BJ (cell line): ENCODE measurements at regions of chr17 and their contacts with region 1.

Region 1: DNA sequence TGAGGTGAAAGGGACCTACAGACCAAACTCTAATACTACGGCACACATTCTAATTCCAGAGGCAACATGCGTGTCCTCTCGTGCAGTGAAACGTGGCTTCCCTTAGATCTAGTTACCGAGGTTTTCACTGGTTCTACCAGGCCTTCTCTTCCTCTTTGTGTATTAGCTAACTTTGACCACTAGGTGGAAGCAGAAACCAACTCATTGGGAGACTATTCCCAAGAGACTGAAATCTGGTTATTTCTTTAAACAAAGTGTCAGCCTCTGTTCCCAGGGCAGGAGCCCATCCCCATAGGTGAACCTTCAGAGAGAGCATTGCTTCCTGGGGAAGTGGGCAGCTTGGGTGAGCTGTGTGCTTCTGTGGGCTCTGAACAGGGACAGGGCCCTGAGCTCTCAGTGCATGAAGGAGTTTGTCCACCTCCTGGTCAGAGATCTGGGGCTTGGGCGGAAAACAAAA is 19.7 kb upstream of the RCVRN start:
- DNase-seq: no peak
- H3K4me3 ChIP-seq: no peak overlapping the region
- H3K27me3 ChIP-seq: peaks cover 3% of the 10 kb centered on the region; the same call in 1 of the 2 replicates
- CTCF ChIP-seq: peak; percentile 82

Region 2: GRCh38 chr17:9912121-9913099 is 12.4 kb before region 1 on chr17:
- CTCF ChIA-PET with region 1: interaction called, 14 read pairs
- POLR2A ChIA-PET with region 1: no interaction called
- DNase-seq: no peak
- H3K4me3 ChIP-seq: no peak overlapping the region
- H3K27me3 ChIP-seq: no peaks in the 10 kb centered on the region
- CTCF ChIP-seq: no peak

Region 3: GRCh38 chr17:9937241-9937761 is 12.5 kb after region 1 on chr17:
- CTCF ChIA-PET with region 1: interaction called, 17 read pairs
- POLR2A ChIA-PET with region 1: no interaction called
- DNase-seq: no peak
- H3K4me3 ChIP-seq: no peak overlapping the region
- H3K27me3 ChIP-seq: no peaks in the 10 kb centered on the region; the same call in 1 of the 2 replicates
- CTCF ChIP-seq: no peak

Region 4: GRCh38 chr17:9959377-9959981 is 34.7 kb after region 1 on chr17:
- CTCF ChIA-PET with region 1: interaction called, 25 read pairs
- POLR2A ChIA-PET with region 1: no interaction called
- DNase-seq: no peak
- H3K4me3 ChIP-seq: no peak overlapping the region
- H3K27me3 ChIP-seq: no peaks in the 10 kb centered on the region
- CTCF ChIP-seq: peak; percentile 64

Region 5: DNA sequence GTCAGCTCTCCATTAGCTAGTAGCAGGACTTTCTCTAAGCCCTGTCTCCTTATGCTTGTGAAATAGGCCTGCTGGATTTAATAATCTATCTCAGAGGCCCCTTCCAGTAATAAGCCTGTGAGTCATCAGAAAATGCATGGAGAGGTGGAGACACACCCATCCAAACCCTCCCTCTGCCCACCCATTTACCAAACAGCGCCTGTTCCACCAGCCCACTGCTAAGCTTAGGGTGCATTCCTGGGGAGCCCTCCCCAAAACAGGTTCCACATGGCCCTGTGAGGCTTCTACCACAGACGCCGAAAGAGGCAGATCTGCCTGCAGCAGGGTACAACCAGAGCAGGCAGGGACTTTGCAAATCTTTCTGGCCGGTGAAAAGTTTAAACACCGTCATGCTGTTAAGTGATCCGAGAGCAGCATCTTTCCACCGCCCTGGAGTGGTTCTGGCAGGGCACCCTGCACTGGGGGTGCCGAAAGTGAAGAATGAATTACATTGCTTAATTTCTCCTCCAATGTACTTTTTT is 174.3 kb after region 1 on chr17:
- CTCF ChIA-PET with region 1: no interaction called
- POLR2A ChIA-PET with region 1: no interaction called
- DNase-seq: peak; percentile 71
- H3K4me3 ChIP-seq: no peak overlapping the region
- H3K27me3 ChIP-seq: no peaks in the 10 kb centered on the region
- CTCF ChIP-seq: no peak

Region 6: GRCh38 chr17:10226930-10227685 is 302.3 kb after region 1 on chr17:
- CTCF ChIA-PET with region 1: interaction called, 18 read pairs
- POLR2A ChIA-PET with region 1: no interaction called
- DNase-seq: no peak
- H3K4me3 ChIP-seq: no peak overlapping the region
- H3K27me3 ChIP-seq: no peaks in the 10 kb centered on the region
- CTCF ChIP-seq: peak; percentile 96